Naive thymus-derived CD4-positive, alpha-beta T cell (primary cell): ENCODE measurements at regions of chr5 and their contacts with region 1.

Region 1: GRCh38 chr5:150560401-150561193 is 52.7 kb downstream of the NDST1 start:
- DNase-seq: peak; percentile 48 to 86 (median 78)
- ATAC-seq: peak; percentile 98
- H3K4me3 ChIP-seq: no peak overlapping the region
- H3K4me3 Mint-ChIP-seq: no peak overlapping the region
- H3K27ac ChIP-seq: no peak overlapping the region
- H3K27ac Mint-ChIP-seq: no peak overlapping the region
- H3K4me1 ChIP-seq: no peaks in the 10 kb centered on the region
- H3K4me1 Mint-ChIP-seq: peaks cover 0 to 3% (median 0%) of the 10 kb centered on the region in 7 donors
- H3K27me3 ChIP-seq: no peaks in the 10 kb centered on the region
- H3K27me3 Mint-ChIP-seq: peaks cover 0 to 10% (median 0%) of the 10 kb centered on the region in 5 donors

Region 2: DNA sequence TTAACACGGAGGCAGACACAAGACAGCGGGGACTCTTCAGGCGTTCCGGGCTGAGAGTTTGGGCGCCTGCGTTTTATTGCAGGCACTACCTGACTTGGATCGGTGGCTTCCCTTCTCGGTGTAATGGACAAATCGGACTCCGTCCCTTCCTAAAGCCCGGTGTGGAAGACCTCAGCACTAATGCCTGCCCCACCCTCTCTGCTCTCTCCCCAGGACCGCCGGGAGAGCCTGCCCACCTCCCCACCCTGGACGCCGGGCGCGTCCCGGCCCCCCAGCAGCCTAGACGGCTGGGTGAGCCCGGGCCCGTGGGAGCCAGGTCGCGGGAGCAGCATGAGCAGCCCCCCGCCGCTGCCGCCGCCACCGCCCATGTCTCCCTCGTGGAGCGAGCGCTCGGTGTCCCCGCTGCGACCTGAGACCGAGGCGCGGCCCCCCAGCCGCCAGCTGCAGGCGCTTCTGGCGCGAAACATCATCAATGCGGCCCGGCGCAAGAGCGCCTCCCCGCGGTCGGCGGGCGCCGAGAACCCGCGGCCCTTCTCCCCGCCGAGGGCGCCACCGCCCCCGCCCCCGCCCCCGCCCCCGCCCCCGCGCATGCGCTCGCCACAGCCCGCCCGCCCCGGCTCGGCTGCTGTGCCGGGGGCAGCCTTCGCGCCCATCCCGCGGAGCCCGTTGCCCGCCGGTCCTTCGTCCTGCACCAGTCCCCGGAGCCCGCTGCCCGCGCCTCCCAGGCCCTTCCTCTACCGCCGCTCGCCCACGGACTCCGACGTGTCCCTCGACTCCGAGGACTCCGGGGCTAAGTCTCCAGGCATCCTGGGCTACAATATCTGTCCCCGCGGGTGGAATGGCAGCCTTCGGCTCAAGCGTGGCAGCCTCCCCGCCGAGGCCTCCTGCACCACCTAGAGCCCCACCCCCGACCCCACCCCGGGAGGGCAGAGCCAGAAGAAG is 95.9 kb after region 1 on chr5:
- CTCF ChIA-PET with region 1: interaction called, 6 read pairs
- POLR2A ChIA-PET with region 1: no interaction called
- intact Hi-C with region 1: loop called (anchors 1 kb)
- DNase-seq: peak; percentile 74 to 88 (median 83)
- ATAC-seq: peak; percentile 96
- H3K4me3 ChIP-seq: peak overlapping the region; percentile 75
- H3K4me3 Mint-ChIP-seq: peak overlapping the region; percentile 75 to 90 (median 84)
- H3K27ac ChIP-seq: peak overlapping the region; percentile 63
- H3K27ac Mint-ChIP-seq: peak overlapping the region in 7 of 9 donors; percentile 17 to 74 (median 54)
- H3K4me1 ChIP-seq: peaks cover 0 to 4% of the 10 kb centered on the region in 2 donors
- H3K4me1 Mint-ChIP-seq: peaks cover 0 to 12% (median 5%) of the 10 kb centered on the region in 7 donors
- H3K27me3 ChIP-seq: no peaks in the 10 kb centered on the region
- H3K27me3 Mint-ChIP-seq: peaks cover 0 to 19% (median 0%) of the 10 kb centered on the region in 5 donors

Region 3: GRCh38 chr5:150710165-150710564 is 149.6 kb after region 1 on chr5:
- CTCF ChIA-PET with region 1: interaction called, 5 read pairs
- POLR2A ChIA-PET with region 1: no interaction called
- intact Hi-C with region 1: loop called in 1 of 2 experiments (anchors 1 kb)
- DNase-seq: peak in 1 of 9 donors; percentile 20
- ATAC-seq: no peak
- H3K4me3 ChIP-seq: no peak overlapping the region
- H3K4me3 Mint-ChIP-seq: no peak overlapping the region
- H3K27ac ChIP-seq: no peak overlapping the region
- H3K27ac Mint-ChIP-seq: no peak overlapping the region
- H3K4me1 ChIP-seq: no peaks in the 10 kb centered on the region
- H3K4me1 Mint-ChIP-seq: no peaks in the 10 kb centered on the region
- H3K27me3 ChIP-seq: no peaks in the 10 kb centered on the region
- H3K27me3 Mint-ChIP-seq: no peaks in the 10 kb centered on the region

Region 4: GRCh38 chr5:150801117-150801927 is 240.7 kb after region 1 on chr5:
- CTCF ChIA-PET with region 1: no interaction called
- POLR2A ChIA-PET with region 1: no interaction called
- intact Hi-C with region 1: loop called in 1 of 2 experiments (anchors 1 kb)
- DNase-seq: peak in 7 of 9 donors; percentile 25 to 53 (median 43)
- ATAC-seq: peak; percentile 55
- H3K4me3 ChIP-seq: no peak overlapping the region
- H3K4me3 Mint-ChIP-seq: peak overlapping the region in 1 of 10 donors; percentile 18
- H3K27ac ChIP-seq: no peak overlapping the region
- H3K27ac Mint-ChIP-seq: no peak overlapping the region
- H3K4me1 ChIP-seq: no peaks in the 10 kb centered on the region
- H3K4me1 Mint-ChIP-seq: peaks cover 0 to 18% (median 5%) of the 10 kb centered on the region in 7 donors
- H3K27me3 ChIP-seq: no peaks in the 10 kb centered on the region
- H3K27me3 Mint-ChIP-seq: peaks cover 0 to 16% (median 5%) of the 10 kb centered on the region in 5 donors